ENCODE measurements at regions of chr2 and their contacts with region 1.

Region 1: DNA sequence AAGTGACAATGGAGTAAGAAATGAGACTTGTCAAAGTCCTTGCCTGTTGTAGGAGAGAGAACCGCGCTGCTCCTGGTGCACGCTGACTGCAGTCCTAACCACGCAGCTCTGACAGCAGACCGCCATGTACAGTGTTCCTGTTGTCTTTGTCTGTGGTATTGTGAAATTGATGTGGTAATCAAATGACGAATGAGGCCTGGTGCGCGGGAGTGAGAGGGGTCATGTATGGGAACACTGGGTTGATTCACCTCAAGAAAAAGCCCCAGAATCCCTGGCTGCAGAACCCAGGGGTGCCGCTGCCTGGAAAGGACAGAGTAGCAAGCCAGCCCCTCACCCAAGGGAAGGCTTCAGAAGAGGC is 64.0 kb downstream of the INPP4A start:
- DNase-seq: peak in 8 of 9 donors; percentile 52 to 75 (median 63)
- ATAC-seq: peak; percentile 81
- H3K4me3 ChIP-seq: no peak overlapping the region
- H3K4me3 Mint-ChIP-seq: peak overlapping the region; percentile 22 to 72 (median 54)
- H3K27ac ChIP-seq: peak overlapping the region; percentile 50
- H3K27ac Mint-ChIP-seq: peak overlapping the region; percentile 72 to 92 (median 86)
- H3K4me1 ChIP-seq: peaks cover 49 to 85% of the 10 kb centered on the region in 2 donors
- H3K4me1 Mint-ChIP-seq: peaks cover 82 to 100% (median 98%) of the 10 kb centered on the region in 7 donors
- H3K27me3 ChIP-seq: no peaks in the 10 kb centered on the region
- H3K27me3 Mint-ChIP-seq: no peaks in the 10 kb centered on the region

Region 2: GRCh38 chr2:97982621-97983020 is 526.1 kb before region 1 on chr2:
- CTCF ChIA-PET with region 1: no interaction called
- POLR2A ChIA-PET with region 1: no interaction called
- intact Hi-C with region 1: no loop called
- DNase-seq: no peak
- ATAC-seq: no peak
- H3K4me3 ChIP-seq: no peak overlapping the region
- H3K4me3 Mint-ChIP-seq: no peak overlapping the region
- H3K27ac ChIP-seq: no peak overlapping the region
- H3K27ac Mint-ChIP-seq: no peak overlapping the region
- H3K4me1 ChIP-seq: no peaks in the 10 kb centered on the region
- H3K4me1 Mint-ChIP-seq: peaks cover 7 to 75% (median 45%) of the 10 kb centered on the region in 7 donors
- H3K27me3 ChIP-seq: no peaks in the 10 kb centered on the region
- H3K27me3 Mint-ChIP-seq: no peaks in the 10 kb centered on the region

Region 3: GRCh38 chr2:98473995-98474780 is 34.5 kb before region 1 on chr2:
- CTCF ChIA-PET with region 1: interaction called, 3 read pairs
- POLR2A ChIA-PET with region 1: no interaction called
- intact Hi-C with region 1: loop called in 1 of 2 experiments (anchors 5 kb)
- DNase-seq: peak in 3 of 9 donors; percentile 22 to 40 (median 29)
- ATAC-seq: peak; percentile 51
- H3K4me3 ChIP-seq: peak overlapping the region; percentile 25
- H3K4me3 Mint-ChIP-seq: peak overlapping the region; percentile 51 to 83 (median 79)
- H3K27ac ChIP-seq: peak overlapping the region; percentile 55
- H3K27ac Mint-ChIP-seq: peak overlapping the region; percentile 84 to 97 (median 90)
- H3K4me1 ChIP-seq: peaks cover 84 to 95% of the 10 kb centered on the region in 2 donors
- H3K4me1 Mint-ChIP-seq: peaks cover 74 to 100% (median 98%) of the 10 kb centered on the region in 7 donors
- H3K27me3 ChIP-seq: no peaks in the 10 kb centered on the region
- H3K27me3 Mint-ChIP-seq: no peaks in the 10 kb centered on the region

Region 4: GRCh38 chr2:98487806-98488651 is 20.7 kb before region 1 on chr2:
- CTCF ChIA-PET with region 1: interaction called, 11 read pairs
- POLR2A ChIA-PET with region 1: interaction called, 6 read pairs
- intact Hi-C with region 1: loop called in 1 of 2 experiments (anchors 2 kb)
- DNase-seq: peak in 7 of 9 donors; percentile 49 to 68 (median 59)
- ATAC-seq: peak; percentile 90
- H3K4me3 ChIP-seq: no peak overlapping the region
- H3K4me3 Mint-ChIP-seq: peak overlapping the region; percentile 16 to 82 (median 58)
- H3K27ac ChIP-seq: peak overlapping the region; percentile 23
- H3K27ac Mint-ChIP-seq: peak overlapping the region; percentile 38 to 93 (median 75)
- H3K4me1 ChIP-seq: peaks cover 69 to 76% of the 10 kb centered on the region in 2 donors
- H3K4me1 Mint-ChIP-seq: peaks cover 56 to 100% (median 99%) of the 10 kb centered on the region in 7 donors
- H3K27me3 ChIP-seq: no peaks in the 10 kb centered on the region
- H3K27me3 Mint-ChIP-seq: no peaks in the 10 kb centered on the region

Region 5: DNA sequence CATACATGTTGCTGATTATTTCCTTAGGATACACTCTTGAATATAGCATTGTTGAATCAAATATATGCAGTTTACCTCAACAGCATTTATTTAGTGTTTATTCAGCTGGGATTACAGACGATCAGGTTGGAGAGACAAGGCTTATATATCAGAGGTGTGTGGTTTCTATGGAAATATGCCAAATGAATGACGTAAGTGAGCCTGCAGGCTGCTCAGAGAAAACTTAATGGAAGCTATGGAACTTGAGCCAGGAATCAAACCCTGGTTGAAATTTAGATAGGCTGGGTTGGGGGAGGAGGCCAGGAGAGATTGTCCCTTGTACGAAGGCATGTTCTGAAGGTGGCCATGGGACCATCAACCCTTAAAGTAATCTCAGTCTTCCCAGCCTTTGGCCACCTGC is 15.5 kb after region 1 on chr2:
- CTCF ChIA-PET with region 1: no interaction called
- POLR2A ChIA-PET with region 1: no interaction called
- intact Hi-C with region 1: no loop called
- DNase-seq: no peak
- ATAC-seq: no peak
- H3K4me3 ChIP-seq: no peak overlapping the region
- H3K4me3 Mint-ChIP-seq: no peak overlapping the region
- H3K27ac ChIP-seq: no peak overlapping the region
- H3K27ac Mint-ChIP-seq: peak overlapping the region in 4 of 9 donors; percentile 21 to 75 (median 40)
- H3K4me1 ChIP-seq: no peaks in the 10 kb centered on the region
- H3K4me1 Mint-ChIP-seq: peaks cover 7 to 31% (median 22%) of the 10 kb centered on the region in 7 donors
- H3K27me3 ChIP-seq: no peaks in the 10 kb centered on the region
- H3K27me3 Mint-ChIP-seq: no peaks in the 10 kb centered on the region

Measured in naive thymus-derived CD4-positive, alpha-beta T cell (primary cell).